ENCODE measurements at regions of chr17 and their contacts with region 1.

Region 1: GRCh38 chr17:40113110-40113906 is 8.5 kb upstream of the MSL1 start:
- DNase-seq: peak; percentile 97 to 100
- ATAC-seq: peak; percentile 77 to 87
- H3K4me3 ChIP-seq: peak overlapping the region; percentile 42
- H3K27ac ChIP-seq: peak overlapping the region; percentile 86 to 93
- H3K4me1 ChIP-seq: peaks cover 53% of the 10 kb centered on the region
- CTCF ChIP-seq: peak; percentile 35; the same call in 2 of the 3 replicates
- EP300 ChIP-seq: no peak
- POLR2A ChIP-seq: peak; percentile 62
- RAD21 ChIP-seq: peak; percentile 88 to 95; a peak in 4 of 5 replicates

Region 2: DNA sequence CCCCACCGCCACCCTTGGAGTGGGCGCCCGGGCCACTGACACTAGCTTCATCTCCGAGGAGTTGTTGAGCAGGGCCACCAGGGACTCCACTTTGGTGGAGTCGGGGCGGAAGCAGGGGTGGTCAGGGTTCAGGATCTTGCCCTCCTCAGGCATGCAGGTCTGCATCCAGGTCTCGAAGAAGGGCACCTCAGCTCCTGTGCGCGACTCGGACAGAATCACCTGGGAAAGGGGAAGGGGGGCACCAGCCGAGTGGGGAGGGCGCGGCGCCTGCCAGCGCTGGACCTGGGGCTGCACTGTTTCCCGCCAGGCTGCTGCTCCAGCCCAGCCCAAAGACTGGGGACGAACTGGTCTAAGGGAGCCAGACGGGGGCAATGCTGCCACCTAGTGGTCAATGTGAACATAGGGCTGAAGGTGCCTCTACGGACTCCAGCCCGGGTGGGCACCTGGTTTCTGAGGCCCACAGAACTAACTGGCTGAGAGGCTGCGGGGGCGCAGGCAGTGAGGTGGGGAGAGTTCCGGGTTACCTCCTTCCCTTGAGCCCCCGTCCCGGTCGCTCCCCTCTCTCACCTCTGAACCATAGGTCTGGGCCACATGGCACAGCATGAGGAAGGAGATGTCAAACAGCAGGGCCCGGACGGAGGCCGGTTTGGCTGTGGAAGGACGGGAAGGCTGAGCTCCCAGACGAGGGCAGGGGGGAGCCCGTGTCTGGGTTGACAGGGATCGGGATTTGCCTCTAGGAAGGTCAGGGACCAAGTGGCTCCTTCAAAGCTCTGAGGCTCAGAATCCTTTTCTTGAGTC is 86.3 kb before region 1 on chr17:
- CTCF ChIA-PET with region 1: interaction called, 62 read pairs
- POLR2A ChIA-PET with region 1: interaction called, 9 read pairs
- DNase-seq: peak; percentile 83 to 93
- ATAC-seq: peak; percentile 84 to 97
- H3K4me3 ChIP-seq: no peak overlapping the region
- H3K27ac ChIP-seq: peak overlapping the region; percentile 30 to 56; a peak in 4 of 6 replicates
- H3K4me1 ChIP-seq: peaks cover 23% of the 10 kb centered on the region
- CTCF ChIP-seq: peak; percentile 96
- EP300 ChIP-seq: no peak
- POLR2A ChIP-seq: no peak
- RAD21 ChIP-seq: peak; percentile 77 to 79

Region 3: DNA sequence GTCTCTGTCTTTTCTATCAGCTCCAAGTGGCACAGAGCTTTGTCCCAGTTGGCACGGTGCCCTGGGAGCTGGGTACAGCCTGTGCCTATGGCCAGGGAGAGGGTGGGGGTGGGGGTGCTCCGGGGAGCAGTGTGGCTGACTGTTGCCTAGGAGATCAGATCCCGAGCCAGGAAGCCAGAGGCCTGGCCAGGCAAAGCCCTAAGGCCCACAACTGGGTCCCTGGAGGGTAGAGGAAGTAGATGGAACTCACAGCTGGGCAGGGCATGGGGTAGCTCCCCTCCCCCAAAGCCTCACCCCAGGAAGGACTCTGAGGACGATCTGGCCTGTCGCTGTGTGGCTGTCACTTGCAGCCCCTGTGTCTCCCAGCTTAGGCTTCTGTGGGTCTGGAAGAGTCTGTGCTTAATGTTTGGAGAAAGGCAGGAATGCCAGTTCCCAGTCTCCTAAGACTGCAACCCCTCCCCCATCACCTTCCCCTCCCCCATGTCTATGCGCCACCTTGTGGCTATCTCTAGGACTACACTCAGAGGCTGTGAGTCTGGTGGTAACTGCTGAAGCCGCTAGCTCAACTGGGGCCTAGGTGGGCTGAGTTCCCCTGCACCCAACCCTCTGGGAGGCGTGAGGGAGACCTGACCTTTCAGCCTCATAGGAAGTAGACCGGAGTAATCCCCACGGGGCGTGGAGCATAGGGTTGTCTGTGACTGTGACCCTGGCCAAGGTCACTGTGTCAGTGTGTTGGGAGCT is 37.9 kb before region 1 on chr17:
- CTCF ChIA-PET with region 1: interaction called, 228 read pairs
- POLR2A ChIA-PET with region 1: interaction called, 3 read pairs
- DNase-seq: peak in 1 of 2 experiments; percentile 75
- ATAC-seq: peak; percentile 6 to 43; a peak in 3 of 6 replicates
- H3K4me3 ChIP-seq: 0 out of 3 replicates have a peak overlapping the region, but pooled peaks have one; percentile 2
- H3K27ac ChIP-seq: peak overlapping the region; percentile 95
- H3K4me1 ChIP-seq: peaks cover 59% of the 10 kb centered on the region
- CTCF ChIP-seq: peak; percentile 97
- EP300 ChIP-seq: no peak
- POLR2A ChIP-seq: no peak
- RAD21 ChIP-seq: peak; percentile 73 to 85

Region 4: GRCh38 chr17:40130352-40131042 is 17.2 kb after region 1 on chr17:
- CTCF ChIA-PET with region 1: interaction called, 123 read pairs
- POLR2A ChIA-PET with region 1: interaction called, 60 read pairs
- DNase-seq: no peak
- ATAC-seq: peak; percentile 37 to 52; a peak in 3 of 6 replicates
- H3K4me3 ChIP-seq: no peak overlapping the region
- H3K27ac ChIP-seq: no peak overlapping the region
- H3K4me1 ChIP-seq: peaks cover 3% of the 10 kb centered on the region; the same call in 1 of the 3 replicates
- CTCF ChIP-seq: no peak
- EP300 ChIP-seq: no peak
- POLR2A ChIP-seq: no peak
- RAD21 ChIP-seq: no peak

Region 5: GRCh38 chr17:40157973-40158372 is 44.7 kb after region 1 on chr17:
- CTCF ChIA-PET with region 1: interaction called, 34 read pairs
- POLR2A ChIA-PET with region 1: interaction called, 4 read pairs
- DNase-seq: no peak
- ATAC-seq: no peak; a peak in 1 of 6 replicates
- H3K4me3 ChIP-seq: no peak overlapping the region
- H3K27ac ChIP-seq: no peak overlapping the region
- H3K4me1 ChIP-seq: peaks cover 5% of the 10 kb centered on the region; the same call in 1 of the 3 replicates
- CTCF ChIP-seq: no peak
- EP300 ChIP-seq: no peak
- POLR2A ChIP-seq: no peak
- RAD21 ChIP-seq: no peak

Region 6: DNA sequence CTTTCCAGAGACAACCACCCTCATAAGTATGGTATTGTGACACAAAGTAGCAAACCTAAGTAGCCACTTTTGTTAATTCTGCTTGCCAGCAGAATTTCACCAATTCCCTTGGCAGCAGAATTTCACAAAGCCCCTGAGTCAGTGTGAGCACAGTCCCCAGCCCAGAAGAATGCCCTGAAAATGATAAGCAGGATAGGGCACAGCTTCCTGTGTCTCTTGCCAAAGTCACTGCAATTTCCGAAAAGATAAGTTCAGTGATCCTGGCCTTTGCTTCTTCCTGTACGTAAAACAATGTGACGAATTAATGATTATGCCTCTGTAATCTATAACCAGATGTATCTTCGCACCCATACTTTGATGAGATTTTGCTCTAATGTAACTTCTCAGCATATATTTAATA is 89.8 kb after region 1 on chr17:
- CTCF ChIA-PET with region 1: interaction called, 20 read pairs
- POLR2A ChIA-PET with region 1: no interaction called
- DNase-seq: no peak
- ATAC-seq: no peak
- H3K4me3 ChIP-seq: no peak overlapping the region
- H3K27ac ChIP-seq: no peak overlapping the region
- H3K4me1 ChIP-seq: no peaks in the 10 kb centered on the region
- CTCF ChIP-seq: no peak
- EP300 ChIP-seq: no peak
- POLR2A ChIP-seq: no peak
- RAD21 ChIP-seq: no peak

Measured in A549 (cell line).